Activated naive CD4-positive, alpha-beta T cell treated with anti-CD3 and anti-CD28 coated beads for 36 hours (primary cell): ENCODE measurements at regions of chr2 and their contacts with region 1.

Region 1: DNA sequence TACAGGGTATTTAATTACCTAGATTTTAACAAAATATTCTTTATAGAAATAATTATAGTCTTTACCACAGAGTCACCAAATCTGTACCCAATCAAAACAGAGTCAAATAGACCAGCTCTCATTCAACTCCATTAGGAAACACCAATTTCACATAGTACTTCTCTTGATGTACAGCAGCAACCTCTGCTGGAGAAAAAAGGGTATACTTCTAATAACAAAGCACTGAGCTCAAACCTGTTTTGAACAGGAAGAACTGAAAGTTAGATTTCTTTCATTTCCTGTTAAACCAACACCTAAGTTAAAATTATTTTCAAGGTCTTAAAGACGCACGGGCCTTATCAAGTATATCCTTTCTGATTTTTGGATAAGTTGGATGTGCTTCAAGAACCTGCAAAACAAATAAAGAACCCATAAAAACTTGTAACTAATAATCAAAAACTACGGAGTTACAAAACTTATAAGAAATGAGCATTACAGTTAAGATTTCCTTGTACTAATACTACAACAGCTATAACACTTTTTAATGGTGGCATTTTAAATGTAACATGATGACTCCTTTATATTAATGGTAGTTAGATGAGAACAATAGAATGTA is 79.0 kb downstream of the TTC21B start:
- DNase-seq: peak; percentile 13
- H3K4me3 Mint-ChIP-seq: no peak overlapping the region
- H3K27ac Mint-ChIP-seq: no peak overlapping the region
- H3K4me1 Mint-ChIP-seq: peaks cover 26% of the 10 kb centered on the region
- H3K27me3 Mint-ChIP-seq: no peaks in the 10 kb centered on the region

Region 2: DNA sequence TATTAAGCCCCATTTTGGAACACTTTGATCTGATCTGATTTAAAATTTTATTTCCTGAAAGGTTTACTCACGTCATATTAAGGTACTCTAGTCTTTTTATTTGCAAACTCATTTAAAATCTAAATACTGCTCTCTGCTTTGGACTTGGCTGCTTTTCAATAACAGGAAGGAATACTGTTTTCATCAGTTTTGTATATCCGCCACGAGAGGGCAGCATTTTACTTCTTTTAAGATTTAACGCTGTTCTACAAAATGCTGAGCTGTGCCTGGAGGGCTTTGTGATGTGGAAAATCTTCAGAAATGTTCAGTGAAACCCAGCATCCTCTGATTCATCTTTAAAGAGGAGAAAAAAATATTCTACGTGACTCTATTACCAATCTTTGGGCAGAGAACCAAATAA is 881.7 kb before region 1 on chr2:
- CTCF ChIA-PET with region 1: interaction called, 4 read pairs
- intact Hi-C with region 1: loop called (anchors 1 kb)
- DNase-seq: peak; percentile 64
- H3K4me3 Mint-ChIP-seq: no peak overlapping the region
- H3K27ac Mint-ChIP-seq: no peak overlapping the region
- H3K4me1 Mint-ChIP-seq: peaks cover 11% of the 10 kb centered on the region
- H3K27me3 Mint-ChIP-seq: no peaks in the 10 kb centered on the region

Region 3: DNA sequence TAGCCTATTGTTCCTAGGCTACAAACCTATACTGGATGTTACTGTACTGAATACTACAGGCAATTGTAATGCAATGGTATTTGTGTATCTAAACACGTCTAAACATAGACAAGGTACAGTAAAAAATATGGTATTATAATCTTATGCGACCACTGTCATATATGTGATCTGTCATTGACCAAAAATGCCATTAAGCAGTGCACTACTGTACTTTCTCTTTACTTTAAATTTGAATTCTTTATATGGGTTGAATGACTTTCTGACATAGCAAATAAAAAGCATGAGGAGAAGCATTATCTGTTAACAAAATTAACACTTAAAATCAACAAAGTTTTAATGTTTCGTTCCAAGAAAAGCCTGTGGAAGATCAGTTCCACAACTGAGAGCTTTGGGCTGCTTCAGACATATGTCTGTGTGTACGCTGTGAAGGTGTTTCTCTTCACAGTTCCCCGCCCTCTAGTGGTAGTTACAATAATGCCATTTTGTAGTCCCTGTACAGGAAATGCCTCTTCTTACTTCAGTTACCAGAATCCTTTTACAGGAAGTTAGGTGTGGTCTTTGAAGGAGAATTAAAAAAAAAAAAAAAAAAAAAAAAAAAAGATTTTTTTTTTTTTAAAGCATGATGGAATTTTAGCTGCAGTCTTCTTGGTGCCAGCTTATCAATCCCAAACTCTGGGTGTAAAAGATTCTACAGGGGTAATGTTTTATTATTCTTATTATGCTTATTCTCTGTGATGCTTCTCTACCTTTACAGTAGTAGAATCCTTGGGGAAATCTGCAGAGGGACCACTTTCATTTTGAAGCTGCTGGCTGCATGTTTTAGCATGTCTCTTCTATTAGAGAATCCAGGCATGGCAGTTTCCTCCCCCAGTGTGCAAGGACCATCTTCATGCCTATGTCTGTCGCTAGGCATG is 580.8 kb before region 1 on chr2:
- CTCF ChIA-PET with region 1: no interaction called
- intact Hi-C with region 1: loop called (anchors 1 kb)
- DNase-seq: peak; percentile 52
- H3K4me3 Mint-ChIP-seq: no peak overlapping the region
- H3K27ac Mint-ChIP-seq: no peak overlapping the region
- H3K4me1 Mint-ChIP-seq: peaks cover 5% of the 10 kb centered on the region
- H3K27me3 Mint-ChIP-seq: peaks cover 10% of the 10 kb centered on the region

Region 4: DNA sequence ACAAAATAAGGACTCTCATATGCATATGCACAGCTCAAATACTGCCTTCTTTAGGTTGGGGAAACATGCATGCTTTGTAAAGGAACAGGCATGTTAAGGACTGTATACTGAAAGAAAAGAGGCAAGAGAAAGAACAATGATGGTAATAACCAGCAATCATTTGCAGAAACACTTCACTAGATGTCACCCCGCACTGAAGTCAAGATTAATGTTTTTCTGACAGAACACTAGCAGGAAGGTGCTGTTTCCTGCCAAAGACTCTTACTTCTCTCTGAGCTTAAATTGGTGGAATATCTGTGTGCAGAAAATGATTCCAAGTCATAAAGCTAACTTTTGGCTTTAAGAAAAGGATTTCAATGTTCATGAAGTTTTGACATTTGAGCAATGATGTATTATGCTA is 424.4 kb before region 1 on chr2:
- CTCF ChIA-PET with region 1: no interaction called
- intact Hi-C with region 1: loop called (anchors 1 kb)
- DNase-seq: no peak
- H3K4me3 Mint-ChIP-seq: no peak overlapping the region
- H3K27ac Mint-ChIP-seq: no peak overlapping the region
- H3K4me1 Mint-ChIP-seq: no peaks in the 10 kb centered on the region
- H3K27me3 Mint-ChIP-seq: peaks cover 10% of the 10 kb centered on the region

Region 5: DNA sequence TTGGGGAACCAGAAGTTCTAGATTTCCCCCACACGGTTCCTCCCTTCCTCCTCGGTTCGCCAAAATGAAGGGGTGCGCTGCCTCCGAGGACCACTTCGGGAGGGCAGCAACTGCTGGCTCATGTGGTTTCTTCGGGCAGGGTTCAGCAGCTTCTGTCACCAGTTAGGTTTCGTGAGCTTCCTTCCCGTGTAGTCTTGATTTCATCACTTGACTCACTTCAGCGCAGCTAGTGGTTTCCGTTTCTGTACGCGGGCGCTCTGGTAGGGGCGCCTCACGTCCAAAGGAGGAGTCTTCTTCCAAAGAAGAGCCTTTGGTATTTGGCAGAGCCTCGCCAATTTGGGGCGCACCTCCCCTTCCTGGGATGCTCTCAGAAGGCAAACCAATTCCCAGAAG is 80.0 kb before region 1 on chr2:
- CTCF ChIA-PET with region 1: interaction called, 3 read pairs
- intact Hi-C with region 1: loop called (anchors 1 kb)
- DNase-seq: peak; percentile 78
- H3K4me3 Mint-ChIP-seq: peak overlapping the region; percentile 82
- H3K27ac Mint-ChIP-seq: peak overlapping the region; percentile 78
- H3K4me1 Mint-ChIP-seq: peaks cover 15% of the 10 kb centered on the region
- H3K27me3 Mint-ChIP-seq: peaks cover 32% of the 10 kb centered on the region

Region 6: GRCh38 chr2:166127217-166128155 is 252.9 kb after region 1 on chr2 and contains the start of gene SCN1A:
- CTCF ChIA-PET with region 1: no interaction called
- intact Hi-C with region 1: loop called (anchors 5 kb)
- DNase-seq: no peak
- H3K4me3 Mint-ChIP-seq: no peak within 1 kb of the TSS
- H3K27ac Mint-ChIP-seq: no peak within 1 kb of the TSS
- H3K4me1 Mint-ChIP-seq: peaks cover 2% of the 10 kb centered on the region
- H3K27me3 Mint-ChIP-seq: peaks cover 12% of the 10 kb centered on the region
- total RNA-seq, gene SCN1A: not detected